ENCODE measurements at regions of chr11 and their contacts with region 1.

Region 1: GRCh38 chr11:67648140-67649123 is 2.1 kb downstream of the ACY3 start:
- DNase-seq: peak; percentile 82 to 92 (median 88)
- H3K4me3 ChIP-seq: peak overlapping the region in 4 of 7 experiments; percentile 3 to 77 (median 53)
- H3K27ac ChIP-seq: no peak overlapping the region
- H3K4me1 ChIP-seq: peaks cover 10 to 76% (median 65%) of the 10 kb centered on the region in 4 experiments
- H3K27me3 ChIP-seq: no peaks in the 10 kb centered on the region

Region 2: GRCh38 chr11:67665541-67666362 is 17.3 kb after region 1 on chr11:
- CTCF ChIA-PET with region 1: interaction called, 102 read pairs
- POLR2A ChIA-PET with region 1: no interaction called
- DNase-seq: no peak
- H3K4me3 ChIP-seq: no peak overlapping the region
- H3K27ac ChIP-seq: no peak overlapping the region
- H3K4me1 ChIP-seq: no peaks in the 10 kb centered on the region
- H3K27me3 ChIP-seq: no peaks in the 10 kb centered on the region